Ascending aorta (tissue), 2 donors: ENCODE measurements at regions of chr12 and their contacts with region 1.

Region 1: DNA sequence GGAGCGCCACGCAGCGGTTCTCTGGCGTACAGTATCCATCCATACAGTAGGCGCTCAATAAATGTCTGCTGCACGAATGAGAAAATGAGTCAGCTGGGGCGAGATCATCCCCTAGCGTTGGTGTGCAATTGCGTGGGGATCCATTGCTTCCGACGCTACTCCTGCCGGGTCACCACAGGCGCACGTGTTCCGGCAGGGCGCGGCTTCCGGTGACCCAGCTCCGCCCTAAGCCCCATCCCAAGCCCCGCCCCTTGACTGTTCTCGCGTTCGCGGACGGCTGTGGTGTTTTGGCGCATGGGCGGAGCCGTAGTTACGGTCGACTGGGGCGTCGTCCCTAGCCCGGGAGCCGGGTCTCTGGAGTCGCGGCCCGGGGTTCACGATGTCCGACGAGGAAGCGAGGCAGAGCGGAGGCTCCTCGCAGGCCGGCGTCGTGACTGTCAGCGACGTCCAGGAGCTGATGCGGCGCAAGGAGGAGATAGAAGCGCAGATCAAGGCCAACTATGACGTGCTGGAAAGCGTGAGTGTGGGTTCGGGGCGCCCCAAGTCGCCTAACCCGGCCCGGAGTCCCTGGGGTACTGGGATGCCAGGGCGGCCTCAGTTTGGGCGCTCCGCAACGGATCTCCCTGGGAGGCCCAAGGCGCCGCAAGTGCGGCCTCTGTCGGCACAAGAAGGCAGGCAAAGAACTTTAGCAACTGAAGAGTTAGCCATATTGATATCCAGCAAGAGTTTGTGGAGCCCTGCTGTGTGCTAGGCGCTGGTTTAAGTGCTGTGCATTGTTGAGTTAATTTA is at the start of gene PSMD9:
- DNase-seq: peak; percentile 84 to 98
- H3K4me3 ChIP-seq: peak within 1 kb of the TSS; percentile 74 to 79
- H3K27ac ChIP-seq: peak within 1 kb of the TSS; percentile 94 to 97
- H3K4me1 ChIP-seq: peaks cover 5 to 23% of the 10 kb centered on the region in 2 donors
- H3K27me3 ChIP-seq: no peaks in the 10 kb centered on the region
- CTCF ChIP-seq: peak; percentile 78 to 81 (median 78)
- total RNA-seq, gene PSMD9: 49.8 TPM

Region 2: GRCh38 chr12:121536899-121537813 is 351.5 kb before region 1 on chr12:
- intact Hi-C with region 1: loop called (anchors 5 kb)
- DNase-seq: peak; percentile 57 to 89
- H3K4me3 ChIP-seq: peak overlapping the region; percentile 72 to 82
- H3K27ac ChIP-seq: peak overlapping the region; percentile 77 to 85
- H3K4me1 ChIP-seq: peaks cover 8 to 12% of the 10 kb centered on the region in 2 donors
- H3K27me3 ChIP-seq: no peaks in the 10 kb centered on the region
- CTCF ChIP-seq: no peak

Region 3: DNA sequence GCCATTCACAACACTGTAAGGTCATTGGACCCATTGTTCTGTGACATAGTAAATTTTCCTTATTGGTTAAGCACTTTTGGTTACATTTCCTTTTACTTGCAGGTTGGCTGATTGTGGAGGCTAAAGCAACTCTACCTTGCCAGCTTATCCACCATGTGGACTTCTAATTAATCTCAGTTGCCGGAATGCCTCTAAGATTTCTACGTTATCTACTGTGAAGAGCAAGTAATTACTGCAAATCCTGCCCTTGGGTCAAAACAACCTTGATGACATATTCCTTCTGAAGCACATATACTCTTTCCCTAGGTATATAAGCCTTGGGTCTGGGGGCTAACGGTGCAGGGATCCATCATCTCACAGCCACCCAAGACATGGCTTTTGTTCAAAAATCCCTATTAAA is 199.7 kb before region 1 on chr12:
- intact Hi-C with region 1: loop called (anchors 5 kb)
- DNase-seq: no peak
- H3K4me3 ChIP-seq: no peak overlapping the region
- H3K27ac ChIP-seq: no peak overlapping the region
- H3K4me1 ChIP-seq: peaks cover 0 to 7% of the 10 kb centered on the region in 2 donors
- H3K27me3 ChIP-seq: no peaks in the 10 kb centered on the region
- CTCF ChIP-seq: no peak

Region 4: DNA sequence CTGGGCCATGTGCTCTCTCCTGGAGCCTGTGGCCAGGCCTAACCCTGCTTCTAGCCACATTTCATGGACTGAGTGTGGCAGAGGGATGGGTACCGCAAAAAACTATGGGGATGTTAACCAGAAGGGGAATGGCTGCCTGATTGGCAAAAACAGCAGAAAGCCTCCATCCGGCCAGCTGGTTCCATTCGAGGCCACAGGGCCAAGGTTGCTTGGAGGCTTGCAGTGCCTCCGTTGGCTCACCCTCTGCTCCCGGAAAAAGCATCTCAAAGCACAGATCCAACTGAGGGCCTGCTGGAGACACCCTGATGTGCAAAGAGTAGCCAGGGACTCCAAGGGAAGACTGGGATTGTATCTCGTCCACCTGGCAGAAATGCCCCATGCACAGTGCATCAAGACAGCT is 159.7 kb before region 1 on chr12:
- intact Hi-C with region 1: no loop called
- DNase-seq: no peak
- H3K4me3 ChIP-seq: no peak overlapping the region
- H3K27ac ChIP-seq: no peak overlapping the region
- H3K4me1 ChIP-seq: no peaks in the 10 kb centered on the region
- H3K27me3 ChIP-seq: no peaks in the 10 kb centered on the region
- CTCF ChIP-seq: no peak

Region 5: DNA sequence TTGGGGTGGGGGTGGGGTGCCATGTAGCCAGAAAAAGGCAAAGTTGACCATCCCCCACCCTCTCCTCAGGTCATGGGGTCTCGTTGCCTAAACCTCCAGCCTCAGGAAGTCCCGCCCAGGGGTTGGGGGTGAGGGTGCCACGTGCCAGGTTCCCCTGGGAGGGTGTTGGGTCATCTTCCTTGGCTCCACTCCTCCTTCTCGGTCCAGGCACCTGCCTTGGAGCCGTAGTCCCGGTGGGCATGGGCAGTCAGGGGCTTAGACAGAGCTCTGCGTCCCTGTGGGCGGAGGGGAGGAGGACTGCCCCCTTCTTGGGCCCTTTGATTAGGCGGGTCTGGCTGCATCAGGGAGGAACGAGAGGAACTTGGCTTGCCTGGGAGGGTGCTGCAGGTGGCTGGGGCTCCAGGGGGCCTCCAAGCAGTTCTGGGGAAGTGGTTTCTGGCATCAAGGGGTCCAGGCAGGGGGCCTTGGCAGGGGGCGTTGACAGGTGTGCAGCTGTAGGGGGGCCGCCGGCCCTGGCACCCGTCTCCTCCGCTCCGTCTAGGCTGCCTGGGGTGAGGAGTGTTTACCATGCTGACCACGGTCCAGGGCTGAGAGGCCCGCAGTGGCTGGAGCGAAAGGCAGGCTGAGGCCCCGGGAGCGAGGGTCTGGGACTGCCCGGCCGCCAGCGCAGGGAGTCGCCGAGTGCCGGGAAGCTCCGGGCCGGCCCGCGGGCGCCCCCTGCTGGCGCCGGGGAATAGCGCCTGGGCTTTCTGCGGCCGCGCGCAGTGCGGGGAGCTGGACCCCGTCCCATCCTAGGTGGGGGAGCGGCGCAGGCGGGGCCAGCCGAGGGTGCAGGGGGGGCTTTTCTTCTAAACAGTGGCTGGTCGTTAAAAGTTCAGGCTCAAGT is 77.0 kb before region 1 on chr12:
- intact Hi-C with region 1: loop called (anchors 2 kb)
- DNase-seq: peak in 1 of 2 donors; percentile 68
- H3K4me3 ChIP-seq: peak overlapping the region; percentile 63 to 69
- H3K27ac ChIP-seq: peak overlapping the region; percentile 66 to 80
- H3K4me1 ChIP-seq: peaks cover 24 to 40% of the 10 kb centered on the region in 2 donors
- H3K27me3 ChIP-seq: no peaks in the 10 kb centered on the region
- CTCF ChIP-seq: peak; percentile 93 to 99 (median 99)

Region 6: GRCh38 chr12:121823101-121823726 is 65.5 kb before region 1 on chr12:
- intact Hi-C with region 1: no loop called
- DNase-seq: no peak
- H3K4me3 ChIP-seq: no peak overlapping the region
- H3K27ac ChIP-seq: no peak overlapping the region
- H3K4me1 ChIP-seq: no peaks in the 10 kb centered on the region
- H3K27me3 ChIP-seq: no peaks in the 10 kb centered on the region
- CTCF ChIP-seq: no peak

Region 7: GRCh38 chr12:121839106-121839992 is 49.3 kb before region 1 on chr12:
- intact Hi-C with region 1: loop called (anchors 1 kb)
- DNase-seq: peak; percentile 97 to 100
- H3K4me3 ChIP-seq: peak overlapping the region; percentile 63 to 87
- H3K27ac ChIP-seq: peak overlapping the region; percentile 22 to 70
- H3K4me1 ChIP-seq: peaks cover 0 to 11% of the 10 kb centered on the region in 2 donors
- H3K27me3 ChIP-seq: no peaks in the 10 kb centered on the region
- CTCF ChIP-seq: peak; percentile 44 to 60 (median 44)

Region 8: DNA sequence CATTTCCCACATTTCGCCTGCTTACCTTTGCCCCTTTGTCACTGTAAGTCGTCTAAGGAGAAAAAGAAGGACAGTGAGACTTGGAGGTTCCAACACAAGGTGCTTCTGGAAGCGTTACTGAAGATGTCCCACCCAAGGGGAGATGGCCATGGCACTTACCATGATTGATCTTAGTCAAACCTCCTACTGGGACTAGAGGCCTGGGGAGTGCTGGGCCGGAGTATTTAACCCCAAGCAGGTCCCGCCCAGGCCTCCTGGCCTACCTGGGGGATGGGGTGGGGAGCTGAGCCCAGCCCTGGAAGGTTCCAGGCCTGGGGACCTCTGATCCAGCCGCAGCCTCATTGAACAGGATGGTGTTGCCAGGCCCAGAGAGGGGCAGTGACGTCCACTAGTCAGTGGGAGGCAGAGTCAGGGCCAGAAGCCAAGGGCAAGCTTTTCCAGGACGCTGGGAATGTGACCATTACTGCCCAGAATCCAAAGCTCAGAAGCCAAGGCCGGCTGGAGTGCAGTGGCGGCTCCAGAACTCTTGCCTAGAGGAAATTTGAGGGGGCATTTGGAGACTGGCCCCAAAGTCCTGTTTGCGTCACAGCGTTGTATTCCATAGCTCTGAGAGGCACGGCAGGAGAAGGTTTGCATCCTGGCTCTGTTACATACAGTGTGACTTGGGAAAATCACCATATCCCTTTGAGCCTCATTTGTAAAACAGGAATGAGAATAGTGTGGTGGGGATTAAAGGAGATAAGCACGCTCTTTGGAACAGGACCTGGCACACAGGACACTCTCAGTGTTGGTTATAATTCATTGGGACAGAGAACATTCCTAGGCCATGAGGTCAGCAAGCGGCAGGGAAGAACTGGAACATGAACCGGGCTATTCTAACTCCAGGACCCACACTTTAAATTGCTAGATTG is 29.8 kb before region 1 on chr12 and contains the start of gene HPD:
- intact Hi-C with region 1: loop called (anchors 1 kb)
- DNase-seq: peak; percentile 33 to 90
- H3K4me3 ChIP-seq: peak within 1 kb of the TSS; percentile 10 to 16
- H3K27ac ChIP-seq: peak within 1 kb of the TSS; percentile 97
- H3K4me1 ChIP-seq: peaks cover 18 to 33% of the 10 kb centered on the region in 2 donors
- H3K27me3 ChIP-seq: no peaks in the 10 kb centered on the region
- CTCF ChIP-seq: no peak
- total RNA-seq, gene HPD: 0.96 TPM